ENCODE measurements at regions of chr14 and their contacts with region 1.

Region 1: GRCh38 chr14:31561155-31561846 is at the start of gene NUBPL:
- DNase-seq: peak; percentile 79 to 97
- H3K4me3 ChIP-seq: peak within 1 kb of the TSS; percentile 88 to 98
- H3K27ac ChIP-seq: peak within 1 kb of the TSS; percentile 79 to 82
- H3K4me1 ChIP-seq: peaks cover 0 to 4% of the 10 kb centered on the region in 2 donors
- H3K27me3 ChIP-seq: no peaks in the 10 kb centered on the region
- CTCF ChIP-seq: no peak
- total RNA-seq, gene NUBPL: 1.7 TPM

Region 2: DNA sequence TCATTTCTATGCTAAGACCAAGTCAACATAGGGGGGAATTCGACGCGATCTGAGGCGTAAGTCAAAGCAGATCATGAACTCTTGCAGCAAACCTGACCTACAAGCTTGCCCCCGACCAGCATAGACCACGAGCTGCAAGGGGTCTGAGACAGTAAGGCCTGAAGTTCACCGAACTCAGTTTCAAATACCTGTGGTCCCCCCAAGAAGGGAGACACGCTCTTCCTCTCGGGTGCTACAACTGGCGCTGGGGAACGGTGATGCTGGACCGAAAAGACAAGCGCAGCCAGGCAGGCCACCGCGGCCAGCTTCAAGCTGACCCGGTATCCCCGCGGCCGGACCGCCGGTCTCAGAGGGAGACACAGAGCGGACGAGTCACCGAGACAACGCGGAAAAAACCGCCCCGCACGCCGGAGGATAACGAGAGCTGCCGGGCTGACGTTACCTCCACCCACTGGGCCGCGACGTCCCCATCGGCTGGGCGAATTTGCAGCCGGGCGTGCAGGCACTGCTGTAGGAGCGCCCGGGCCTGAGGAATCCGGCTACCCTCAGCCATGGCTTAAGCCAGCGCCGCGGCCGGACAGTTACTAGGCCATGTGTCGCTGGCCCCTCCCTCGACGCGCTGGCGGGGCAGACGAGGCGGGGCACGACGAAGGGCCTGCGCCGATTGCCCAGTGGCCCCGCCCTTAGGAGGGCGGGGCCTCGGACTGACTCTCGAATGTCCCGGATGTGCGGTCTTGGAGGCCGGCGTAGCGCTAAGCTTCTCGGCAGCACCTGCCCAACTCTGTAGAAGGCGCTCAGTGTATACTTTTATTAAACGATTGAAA is 104.2 kb before region 1 on chr14 and contains the start of gene DTD2:
- intact Hi-C with region 1: loop called (anchors 2 kb)
- DNase-seq: peak; percentile 75 to 97
- H3K4me3 ChIP-seq: peak within 1 kb of the TSS; percentile 72 to 74
- H3K27ac ChIP-seq: peak within 1 kb of the TSS; percentile 87 to 90
- H3K4me1 ChIP-seq: peaks cover 4 to 6% of the 10 kb centered on the region in 2 donors
- H3K27me3 ChIP-seq: no peaks in the 10 kb centered on the region
- CTCF ChIP-seq: no peak
- total RNA-seq, gene DTD2: 120 TPM

Region 3: DNA sequence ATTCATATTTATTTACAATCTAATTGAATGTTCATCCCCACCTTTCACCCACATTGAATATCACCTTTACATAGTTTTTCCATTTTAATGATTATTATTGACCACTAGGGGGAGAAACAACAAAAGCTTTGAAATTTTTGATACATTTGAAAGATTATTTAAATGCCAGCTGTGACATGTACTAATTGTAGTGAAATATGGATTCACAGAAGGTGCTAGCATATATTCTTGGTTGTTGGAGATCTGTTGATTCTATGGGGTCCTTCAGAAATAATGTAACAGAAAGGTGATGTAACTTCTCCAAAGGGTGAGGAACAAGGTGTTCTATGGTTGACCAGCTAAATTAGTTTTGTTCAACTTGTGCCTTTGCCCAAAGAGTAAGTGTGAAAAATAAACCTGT is 51.1 kb before region 1 on chr14:
- intact Hi-C with region 1: loop called (anchors 5 kb)
- DNase-seq: no peak
- H3K4me3 ChIP-seq: no peak overlapping the region
- H3K27ac ChIP-seq: no peak overlapping the region
- H3K4me1 ChIP-seq: peaks cover 0 to 7% of the 10 kb centered on the region in 2 donors
- H3K27me3 ChIP-seq: no peaks in the 10 kb centered on the region
- CTCF ChIP-seq: peak; percentile 36 to 63 (median 41)

Region 4: DNA sequence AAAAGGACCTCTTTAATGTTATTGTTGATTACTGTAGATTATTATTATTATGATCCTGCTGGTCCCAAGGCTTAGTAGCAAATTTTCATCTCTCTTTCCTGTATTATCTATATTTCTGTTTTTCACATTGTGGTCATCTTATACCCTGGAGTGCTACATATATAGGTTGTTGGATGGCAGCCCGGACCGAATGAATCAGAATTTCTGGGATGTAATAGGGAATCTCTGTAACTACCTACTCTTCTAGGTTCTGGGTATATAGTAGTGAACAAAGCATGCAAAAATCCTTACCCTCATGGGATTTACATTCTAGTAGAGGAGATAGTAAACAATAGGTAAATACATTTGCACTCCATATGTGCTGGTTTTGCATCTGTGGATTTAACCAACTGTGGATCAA is 31.3 kb after region 1 on chr14:
- intact Hi-C with region 1: no loop called
- DNase-seq: no peak
- H3K4me3 ChIP-seq: no peak overlapping the region
- H3K27ac ChIP-seq: no peak overlapping the region
- H3K4me1 ChIP-seq: no peaks in the 10 kb centered on the region
- H3K27me3 ChIP-seq: no peaks in the 10 kb centered on the region
- CTCF ChIP-seq: no peak

Region 5: GRCh38 chr14:31611778-31612433 is 50.6 kb after region 1 on chr14:
- intact Hi-C with region 1: no loop called
- DNase-seq: no peak
- H3K4me3 ChIP-seq: no peak overlapping the region
- H3K27ac ChIP-seq: no peak overlapping the region
- H3K4me1 ChIP-seq: no peaks in the 10 kb centered on the region
- H3K27me3 ChIP-seq: no peaks in the 10 kb centered on the region
- CTCF ChIP-seq: no peak

Region 6: GRCh38 chr14:32202998-32203882 is 641.9 kb after region 1 on chr14 and contains the start of gene RNU6-8:
- intact Hi-C with region 1: loop called (anchors 5 kb)
- DNase-seq: peak; percentile 40 to 91
- H3K4me3 ChIP-seq: peak within 1 kb of the TSS; percentile 72 to 75
- H3K27ac ChIP-seq: peak within 1 kb of the TSS; percentile 69 to 75
- H3K4me1 ChIP-seq: no peaks in the 10 kb centered on the region
- H3K27me3 ChIP-seq: no peaks in the 10 kb centered on the region
- CTCF ChIP-seq: no peak
- total RNA-seq, gene RNU6-8: not detected

Region 7: DNA sequence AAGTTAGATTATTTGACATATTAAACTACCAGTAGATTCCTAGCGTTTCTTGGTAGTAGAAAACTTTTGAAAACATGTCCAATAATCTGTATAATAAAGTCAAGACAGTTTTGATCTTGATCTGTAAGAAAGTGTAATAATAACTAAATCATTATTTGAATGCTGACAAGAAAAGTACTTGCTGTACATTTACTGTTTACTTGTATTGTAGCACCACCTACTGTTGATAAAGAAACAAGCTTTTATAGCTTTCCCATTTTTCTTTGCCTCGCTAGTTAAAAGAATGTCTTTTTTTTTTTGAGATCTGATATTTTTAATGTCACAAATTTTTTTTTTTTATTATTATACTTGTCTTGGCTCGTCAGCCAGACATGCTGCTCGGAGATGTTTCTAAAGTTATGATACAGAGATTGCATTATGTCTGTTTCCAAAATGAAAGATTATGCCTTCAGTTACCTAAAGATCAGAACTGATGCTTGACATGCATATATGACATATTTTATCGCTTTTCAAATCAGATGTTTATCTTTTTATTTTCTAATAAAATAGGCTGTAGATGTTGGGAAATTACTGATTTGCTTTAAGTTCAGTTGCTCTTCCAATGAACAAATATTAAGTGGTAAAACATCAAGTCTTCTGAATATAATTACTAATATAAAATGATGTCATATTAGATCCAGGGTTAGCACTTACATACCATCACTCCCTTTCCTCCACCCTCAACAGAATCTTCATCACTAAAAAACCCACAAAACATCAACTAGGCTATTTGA is 908.3 kb after region 1 on chr14:
- intact Hi-C with region 1: loop called (anchors 5 kb)
- DNase-seq: no peak
- H3K4me3 ChIP-seq: no peak overlapping the region
- H3K27ac ChIP-seq: peak overlapping the region; percentile 65 to 83
- H3K4me1 ChIP-seq: peaks cover 5 to 35% of the 10 kb centered on the region in 2 donors
- H3K27me3 ChIP-seq: no peaks in the 10 kb centered on the region
- CTCF ChIP-seq: peak; percentile 23 to 59 (median 51)

Measured in ascending aorta (tissue), 2 donors.